Spleen (tissue), 13 donors: ENCODE measurements at regions of chr2 and their contacts with region 1.

Region 1: DNA sequence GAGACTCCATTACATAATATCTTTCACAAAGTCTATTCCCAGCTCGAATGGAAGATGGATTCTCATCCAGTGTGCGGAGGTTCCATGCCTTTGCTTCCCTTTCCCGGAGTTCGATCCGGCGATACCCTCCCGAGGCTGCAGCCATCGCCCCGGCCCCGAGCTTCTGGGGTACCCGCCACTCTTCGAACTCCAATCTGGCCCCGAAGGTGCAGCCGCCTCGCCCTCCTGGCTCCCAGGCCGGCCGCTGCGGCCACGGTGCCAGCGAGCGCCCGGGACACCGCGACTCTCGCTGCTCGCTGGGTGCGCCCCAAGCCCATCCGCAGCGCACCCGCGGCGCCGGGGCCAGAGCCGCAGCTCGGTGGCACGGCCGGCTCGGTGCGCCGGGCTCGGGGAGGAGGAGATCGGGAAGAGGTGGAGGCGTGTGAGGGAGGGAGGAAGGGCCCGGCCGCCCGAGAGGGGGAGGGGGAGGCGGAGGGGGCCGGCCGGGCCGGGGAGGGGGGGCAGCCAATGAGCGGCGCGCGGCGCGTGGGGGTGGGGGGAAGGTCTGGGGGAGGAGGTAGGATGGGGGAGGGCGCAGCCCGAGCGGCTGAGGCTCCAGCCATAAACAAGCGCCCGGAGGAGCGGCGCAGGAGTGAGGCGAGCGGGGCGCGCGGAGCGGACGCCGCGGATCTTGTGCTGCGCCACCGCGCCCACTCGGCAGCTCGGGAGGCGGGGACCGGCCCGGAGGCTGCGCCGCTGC is at the start of gene CRIM1:
- DNase-seq: peak; percentile 92
- H3K4me3 ChIP-seq: peak within 1 kb of the TSS; percentile 48 to 90 (median 75)
- H3K27ac ChIP-seq: peak within 1 kb of the TSS; percentile 67 to 88 (median 86)
- H3K4me1 ChIP-seq: peaks cover 29 to 84% (median 70%) of the 10 kb centered on the region in 6 donors
- H3K27me3 ChIP-seq: peaks cover 0 to 44% (median 5%) of the 10 kb centered on the region in 7 donors
- CTCF ChIP-seq: no peak
- POLR2A ChIP-seq: peak in 1 of 3 donors; percentile 89
- total RNA-seq, gene CRIM1: 91.5 to 213 (median 120) TPM

Region 2: GRCh38 chr2:36403675-36404230 is 48.4 kb after region 1 on chr2:
- intact Hi-C with region 1: loop called (anchors 2 kb)
- DNase-seq: no peak
- H3K4me3 ChIP-seq: no peak overlapping the region
- H3K27ac ChIP-seq: peak overlapping the region in 6 of 8 donors; percentile 64 to 81 (median 70)
- H3K4me1 ChIP-seq: peaks cover 7 to 55% (median 46%) of the 10 kb centered on the region in 6 donors
- H3K27me3 ChIP-seq: no peaks in the 10 kb centered on the region
- CTCF ChIP-seq: no peak
- POLR2A ChIP-seq: no peak

Region 3: GRCh38 chr2:36478332-36478738 is 123.0 kb after region 1 on chr2:
- intact Hi-C with region 1: loop called (anchors 10 kb)
- DNase-seq: no peak
- H3K4me3 ChIP-seq: no peak overlapping the region
- H3K27ac ChIP-seq: peak overlapping the region in 6 of 8 donors; percentile 5 to 62 (median 44)
- H3K4me1 ChIP-seq: peaks cover 0 to 25% (median 15%) of the 10 kb centered on the region in 6 donors
- H3K27me3 ChIP-seq: no peaks in the 10 kb centered on the region
- CTCF ChIP-seq: no peak
- POLR2A ChIP-seq: no peak

Region 4: DNA sequence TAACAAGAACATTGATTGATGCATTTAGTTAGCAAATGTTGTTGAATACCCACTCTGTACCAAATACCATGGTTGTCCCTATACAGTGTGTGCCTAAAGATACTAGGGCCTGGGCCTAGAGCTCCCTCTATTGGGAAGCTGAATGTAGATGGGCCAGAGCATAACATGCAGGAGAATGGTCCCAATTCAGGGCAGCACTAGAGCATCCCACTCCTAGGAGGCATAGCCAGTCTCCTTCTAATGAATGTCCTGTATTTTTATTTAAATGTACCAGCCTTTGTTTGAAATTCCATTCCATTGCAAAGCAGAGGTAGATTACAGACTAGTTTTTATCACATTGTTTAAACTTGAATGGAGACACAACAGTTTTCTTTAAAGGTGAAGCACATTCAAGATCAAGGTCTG is 152.1 kb after region 1 on chr2:
- intact Hi-C with region 1: loop called (anchors 5 kb)
- DNase-seq: no peak
- H3K4me3 ChIP-seq: no peak overlapping the region
- H3K27ac ChIP-seq: no peak overlapping the region
- H3K4me1 ChIP-seq: no peaks in the 10 kb centered on the region
- H3K27me3 ChIP-seq: no peaks in the 10 kb centered on the region
- CTCF ChIP-seq: peak in 10 of 11 experiments; percentile 8 to 76 (median 60)
- POLR2A ChIP-seq: no peak